ENCODE measurements at regions of chr2 and their contacts with region 1.

Region 1: GRCh38 chr2:47386551-47386950 is 16.4 kb upstream of the MSH2 start:
- DNase-seq: no peak
- H3K4me3 Mint-ChIP-seq: no peak overlapping the region
- H3K27ac Mint-ChIP-seq: no peak overlapping the region
- H3K4me1 Mint-ChIP-seq: no peaks in the 10 kb centered on the region
- H3K27me3 Mint-ChIP-seq: no peaks in the 10 kb centered on the region
- CTCF ChIP-seq: no peak

Region 2: DNA sequence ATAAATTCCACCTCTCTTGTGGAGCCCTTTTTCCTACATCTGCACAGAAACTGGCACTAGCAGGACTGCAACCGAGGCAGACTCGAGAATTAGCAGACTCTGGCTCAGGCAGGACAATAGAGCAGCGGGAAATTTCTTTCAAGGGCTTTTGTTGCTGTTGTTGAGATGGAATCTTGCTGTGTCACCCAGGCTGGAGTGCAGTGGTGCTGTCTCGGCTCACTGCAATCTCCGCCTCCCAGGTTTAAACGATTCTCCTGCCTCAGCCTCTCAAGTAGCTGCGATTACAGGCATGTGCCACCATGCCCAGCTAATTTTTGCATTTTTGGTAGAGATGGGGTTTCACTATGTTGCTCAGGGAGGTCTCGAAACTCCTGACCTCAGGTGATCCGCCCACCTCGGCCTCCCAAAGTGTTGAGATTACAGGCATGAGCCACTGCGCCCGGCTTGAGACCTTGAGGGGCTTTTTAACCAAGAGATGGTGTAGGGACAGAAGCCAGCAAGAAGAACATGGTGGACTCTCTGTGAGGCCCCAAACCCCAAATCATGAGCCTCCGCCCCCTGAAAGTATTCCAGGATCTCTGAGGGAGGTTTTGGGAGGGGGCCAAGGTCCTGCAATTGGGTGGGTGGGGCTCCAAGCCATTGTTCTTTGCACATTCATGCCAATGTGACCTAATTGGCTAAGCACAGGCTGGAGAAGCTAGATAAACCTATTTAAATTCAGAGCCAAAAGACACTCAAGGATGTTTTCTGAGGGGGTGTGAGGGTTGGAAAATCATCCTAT is 52.0 kb before region 1 on chr2:
- CTCF ChIA-PET with region 1: interaction called, 80 read pairs
- intact Hi-C with region 1: loop called (anchors 1 kb)
- DNase-seq: no peak
- H3K4me3 Mint-ChIP-seq: no peak overlapping the region
- H3K27ac Mint-ChIP-seq: no peak overlapping the region
- H3K4me1 Mint-ChIP-seq: peaks cover 15% of the 10 kb centered on the region
- H3K27me3 Mint-ChIP-seq: no peaks in the 10 kb centered on the region
- CTCF ChIP-seq: no peak

Region 3: GRCh38 chr2:47339745-47340541 is 46.6 kb before region 1 on chr2:
- CTCF ChIA-PET with region 1: interaction called, 80 read pairs
- intact Hi-C with region 1: loop called (anchors 1 kb)
- DNase-seq: peak; percentile 84
- H3K4me3 Mint-ChIP-seq: peak overlapping the region; percentile 55
- H3K27ac Mint-ChIP-seq: peak overlapping the region; percentile 94
- H3K4me1 Mint-ChIP-seq: peaks cover 49% of the 10 kb centered on the region
- H3K27me3 Mint-ChIP-seq: no peaks in the 10 kb centered on the region
- CTCF ChIP-seq: no peak

Region 4: GRCh38 chr2:47344890-47345589 is 41.5 kb before region 1 on chr2:
- CTCF ChIA-PET with region 1: interaction called, 5 read pairs
- intact Hi-C with region 1: loop called (anchors 2 kb)
- DNase-seq: peak; percentile 96
- H3K4me3 Mint-ChIP-seq: peak overlapping the region; percentile 81
- H3K27ac Mint-ChIP-seq: peak overlapping the region; percentile 84
- H3K4me1 Mint-ChIP-seq: peaks cover 58% of the 10 kb centered on the region
- H3K27me3 Mint-ChIP-seq: no peaks in the 10 kb centered on the region
- CTCF ChIP-seq: peak; percentile 15